Cardiac septum (tissue), 1 donor: ENCODE measurements at regions of chr6 and their contacts with region 1.

Region 1: GRCh38 chr6:35601331-35602132 is 87.2 kb downstream of the FKBP5 start:
- DNase-seq: peak; percentile 77

Region 2: DNA sequence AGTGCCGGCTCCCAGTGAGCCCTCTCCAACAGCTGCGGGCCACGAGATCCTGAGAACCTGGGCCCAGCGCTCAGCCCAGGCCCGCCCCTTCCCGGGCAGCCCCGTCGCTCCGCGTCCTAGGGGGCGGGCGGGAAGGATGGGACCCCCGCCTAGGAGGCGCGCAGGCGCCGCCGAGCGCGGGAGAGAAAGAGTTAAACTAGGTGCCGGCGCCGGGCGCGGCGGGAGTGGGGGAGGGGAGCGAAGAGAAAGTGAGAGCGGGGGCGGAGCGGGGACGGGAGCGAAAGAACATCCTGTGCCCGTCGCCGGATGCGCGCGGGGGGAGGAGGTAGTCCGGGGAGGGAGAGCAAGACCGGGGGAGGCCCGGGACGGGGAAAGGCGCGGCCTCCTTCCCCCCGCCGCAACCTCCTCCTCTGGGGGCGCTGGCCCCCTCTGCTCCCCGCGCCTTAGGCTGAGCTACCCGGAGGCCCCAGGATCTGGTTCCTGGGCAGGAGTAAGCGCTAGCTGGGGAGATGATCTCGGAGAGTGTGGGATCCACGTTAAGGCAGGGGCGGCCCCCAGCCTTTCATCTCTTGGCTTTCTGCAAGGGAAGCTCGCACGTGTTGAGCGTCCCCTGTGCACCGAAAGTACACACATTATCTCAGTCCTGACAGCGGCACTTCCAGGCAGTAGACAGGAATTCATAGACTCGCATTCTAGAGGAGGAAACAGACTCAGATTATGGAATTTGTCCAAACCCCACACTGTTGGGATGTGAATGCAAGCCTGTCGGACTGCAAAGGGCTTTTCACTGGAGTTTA is 130.4 kb after region 1 on chr6:
- intact Hi-C with region 1: loop called (anchors 1 kb)
- DNase-seq: peak; percentile 99